Stomach (tissue), 19 donors: ENCODE measurements at regions of chr12 and their contacts with region 1.

Region 1: DNA sequence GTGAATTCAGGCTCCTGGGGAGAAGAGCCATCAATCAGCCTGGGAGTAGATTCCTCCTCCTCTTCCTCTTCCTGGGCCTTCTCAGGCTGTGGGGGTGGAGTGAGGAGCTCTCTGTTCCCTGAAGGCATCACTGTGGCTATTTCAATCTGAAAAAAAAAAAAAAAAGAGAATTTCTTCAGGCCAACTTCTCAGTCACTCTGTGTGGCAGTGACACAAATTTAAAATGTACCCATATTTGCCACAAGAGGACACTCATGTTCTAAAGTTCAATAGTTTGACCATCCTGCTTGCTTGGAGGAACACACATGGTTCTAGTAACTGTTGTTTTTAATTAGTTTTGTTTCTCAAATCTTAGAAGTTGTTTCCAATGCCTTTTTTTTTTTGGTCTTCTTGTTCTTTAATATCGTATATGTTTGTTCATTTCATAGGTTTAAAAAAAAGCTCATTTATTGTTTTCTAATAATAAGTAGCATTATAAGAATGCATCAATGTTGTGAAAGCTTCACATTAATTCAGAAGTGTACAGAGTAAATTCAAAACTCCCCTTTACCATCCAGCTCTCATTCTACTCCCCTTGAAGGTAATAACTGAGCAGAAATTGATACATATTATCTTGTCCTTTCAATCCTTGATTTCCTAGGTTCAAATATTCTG is 23.3 kb upstream of the CCER1 start:
- DNase-seq: peak in 1 of 2 donors; percentile 82
- H3K4me3 ChIP-seq: no peak overlapping the region
- H3K27ac ChIP-seq: no peak overlapping the region
- H3K4me1 ChIP-seq: no peaks in the 10 kb centered on the region
- H3K27me3 ChIP-seq: no peaks in the 10 kb centered on the region
- CTCF ChIP-seq: peak in 5 of 7 experiments; percentile 34 to 69 (median 61)
- EP300 ChIP-seq: no peak
- POLR2A ChIP-seq: no peak

Region 2: DNA sequence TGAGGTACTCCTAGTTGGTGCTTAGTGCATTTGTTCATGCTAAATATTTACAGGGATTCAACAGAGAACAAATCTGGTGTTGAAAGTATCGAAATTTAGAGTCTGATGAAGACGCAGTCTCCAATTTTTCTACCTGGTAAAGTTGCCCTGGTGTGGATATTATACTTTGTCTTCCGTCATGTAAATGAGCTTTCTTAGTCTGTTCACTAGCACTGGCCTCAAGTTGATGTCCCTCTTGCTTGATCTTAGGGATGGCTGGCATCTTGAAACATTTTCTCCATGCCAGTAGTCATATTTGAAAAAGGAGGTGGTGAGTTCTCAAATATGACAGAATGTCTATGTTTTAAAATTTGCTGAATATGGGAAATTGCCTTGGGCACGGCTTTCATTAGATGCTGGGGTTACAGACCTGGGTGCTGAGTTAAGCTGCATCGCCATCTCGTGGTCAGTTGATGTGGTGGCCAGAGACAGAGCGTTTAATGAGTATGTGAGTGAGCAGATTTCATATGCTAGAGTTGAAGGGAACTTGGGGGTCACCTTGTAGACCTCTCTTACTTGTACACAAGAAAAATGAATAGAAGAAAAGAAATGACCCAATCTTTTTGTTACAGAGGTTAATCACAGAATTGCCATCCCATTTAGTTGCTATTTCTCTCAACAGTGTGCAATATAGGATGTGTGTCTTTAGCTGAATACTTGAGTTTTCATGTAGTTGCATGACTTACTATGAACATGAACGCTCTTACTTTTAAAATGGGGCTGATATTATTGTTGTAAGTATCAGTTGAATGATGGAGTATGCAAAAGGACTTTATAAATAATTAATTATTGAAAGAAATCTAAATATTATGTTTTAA is 377.1 kb after region 1 on chr12:
- intact Hi-C with region 1: loop called (anchors 10 kb)
- DNase-seq: peak; percentile 66 to 93
- H3K4me3 ChIP-seq: no peak overlapping the region
- H3K27ac ChIP-seq: no peak overlapping the region
- H3K4me1 ChIP-seq: peaks cover 0 to 7% (median 3%) of the 10 kb centered on the region in 4 donors
- H3K27me3 ChIP-seq: no peaks in the 10 kb centered on the region
- CTCF ChIP-seq: peak in 5 of 7 experiments; percentile 68 to 80 (median 75)
- EP300 ChIP-seq: no peak
- POLR2A ChIP-seq: no peak